CD4-positive, alpha-beta memory T cell (primary cell): ENCODE measurements at regions of chr13 and their contacts with region 1.

Region 1: GRCh38 chr13:51583875-51584730 is at the start of gene WDFY2:
- DNase-seq: peak; percentile 99 to 100 (median 100)
- H3K4me3 ChIP-seq: peak within 1 kb of the TSS; percentile 65 to 92
- H3K4me3 Mint-ChIP-seq: peak within 1 kb of the TSS; percentile 97 to 100 (median 99)
- H3K27ac ChIP-seq: peak within 1 kb of the TSS; percentile 88
- H3K27ac Mint-ChIP-seq: peak within 1 kb of the TSS; percentile 96 to 100 (median 100)
- H3K4me1 ChIP-seq: peaks cover 26% of the 10 kb centered on the region
- H3K4me1 Mint-ChIP-seq: peaks cover 27 to 44% (median 35%) of the 10 kb centered on the region in 4 donors
- H3K27me3 ChIP-seq: no peaks in the 10 kb centered on the region
- H3K27me3 Mint-ChIP-seq: no peaks in the 10 kb centered on the region
- total RNA-seq, gene WDFY2: 20.0 to 21.8 TPM

Region 2: DNA sequence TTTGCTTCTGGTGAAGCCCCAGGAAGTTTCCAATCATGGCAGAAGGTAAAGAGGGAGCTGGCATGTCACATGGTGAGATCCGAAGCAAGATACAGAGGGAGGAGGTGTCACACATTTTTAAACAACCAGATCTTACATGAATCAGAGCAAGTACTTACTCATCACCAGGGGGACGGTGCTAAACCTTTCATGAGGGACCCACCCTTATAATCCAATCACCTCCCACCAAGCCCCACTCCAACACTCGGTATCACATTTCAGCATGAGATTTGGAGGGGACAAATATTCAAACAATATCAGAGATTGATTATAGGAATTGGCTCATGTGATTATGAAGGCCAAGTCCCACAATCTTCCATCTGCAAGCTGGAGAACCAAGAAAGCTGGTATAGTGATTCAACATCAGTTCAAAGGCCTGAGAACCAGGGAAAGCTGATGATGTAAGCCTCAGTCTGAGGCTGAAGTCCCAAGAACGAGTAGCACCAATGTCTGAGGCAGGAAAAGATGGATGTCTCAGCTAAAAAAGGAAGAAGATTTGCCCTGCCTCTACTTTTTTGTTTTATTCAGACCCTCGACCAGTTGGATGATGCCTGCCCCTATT is 58.4 kb before region 1 on chr13:
- CTCF ChIA-PET with region 1: no interaction called
- POLR2A ChIA-PET with region 1: no interaction called
- intact Hi-C with region 1: no loop called
- DNase-seq: no peak
- H3K4me3 ChIP-seq: no peak overlapping the region
- H3K4me3 Mint-ChIP-seq: no peak overlapping the region
- H3K27ac ChIP-seq: no peak overlapping the region
- H3K27ac Mint-ChIP-seq: no peak overlapping the region
- H3K4me1 ChIP-seq: peaks cover 17% of the 10 kb centered on the region
- H3K4me1 Mint-ChIP-seq: peaks cover 4 to 11% (median 7%) of the 10 kb centered on the region in 4 donors
- H3K27me3 ChIP-seq: no peaks in the 10 kb centered on the region
- H3K27me3 Mint-ChIP-seq: no peaks in the 10 kb centered on the region

Region 3: DNA sequence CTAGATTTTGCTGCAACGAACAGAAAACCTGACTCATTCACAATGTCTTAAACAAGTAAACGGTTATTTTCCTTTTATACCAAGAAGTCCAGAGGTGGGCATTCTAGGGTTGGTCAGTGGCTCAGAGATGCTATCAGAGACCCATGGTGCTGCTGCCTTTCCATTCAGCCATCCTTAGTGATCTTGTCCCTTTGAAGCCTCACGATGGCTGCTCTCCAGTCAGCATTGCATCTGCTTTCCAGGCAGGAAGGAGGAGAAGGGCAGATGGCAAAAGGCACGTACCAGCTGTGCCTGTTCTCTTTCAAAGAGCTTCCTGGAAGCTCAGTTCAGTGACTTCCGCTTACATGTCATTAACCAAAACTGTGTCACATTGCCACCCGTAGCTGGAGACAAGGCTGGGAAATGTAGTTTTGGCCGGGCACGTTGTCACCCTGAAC is 30.3 kb after region 1 on chr13:
- CTCF ChIA-PET with region 1: interaction called, 14 read pairs
- POLR2A ChIA-PET with region 1: interaction called, 17 read pairs
- intact Hi-C with region 1: loop called (anchors 1 kb)
- DNase-seq: peak; percentile 49 to 60 (median 56)
- H3K4me3 ChIP-seq: peak overlapping the region; percentile 39 to 42
- H3K4me3 Mint-ChIP-seq: peak overlapping the region; percentile 43 to 93 (median 90)
- H3K27ac ChIP-seq: peak overlapping the region; percentile 51
- H3K27ac Mint-ChIP-seq: peak overlapping the region; percentile 68 to 99 (median 95)
- H3K4me1 ChIP-seq: peaks cover 11% of the 10 kb centered on the region
- H3K4me1 Mint-ChIP-seq: peaks cover 10 to 34% (median 17%) of the 10 kb centered on the region in 4 donors
- H3K27me3 ChIP-seq: no peaks in the 10 kb centered on the region
- H3K27me3 Mint-ChIP-seq: no peaks in the 10 kb centered on the region

Region 4: GRCh38 chr13:51645154-51645650 is 61.1 kb after region 1 on chr13:
- CTCF ChIA-PET with region 1: interaction called, 3 read pairs
- POLR2A ChIA-PET with region 1: interaction called, 15 read pairs
- intact Hi-C with region 1: loop called (anchors 2 kb)
- DNase-seq: peak; percentile 79 to 88 (median 81)
- H3K4me3 ChIP-seq: no peak overlapping the region
- H3K4me3 Mint-ChIP-seq: peak overlapping the region; percentile 43 to 89 (median 84)
- H3K27ac ChIP-seq: peak overlapping the region; percentile 74
- H3K27ac Mint-ChIP-seq: peak overlapping the region; percentile 97 to 100 (median 98)
- H3K4me1 ChIP-seq: peaks cover 51% of the 10 kb centered on the region
- H3K4me1 Mint-ChIP-seq: peaks cover 47 to 60% (median 50%) of the 10 kb centered on the region in 4 donors
- H3K27me3 ChIP-seq: no peaks in the 10 kb centered on the region
- H3K27me3 Mint-ChIP-seq: no peaks in the 10 kb centered on the region

Region 5: DNA sequence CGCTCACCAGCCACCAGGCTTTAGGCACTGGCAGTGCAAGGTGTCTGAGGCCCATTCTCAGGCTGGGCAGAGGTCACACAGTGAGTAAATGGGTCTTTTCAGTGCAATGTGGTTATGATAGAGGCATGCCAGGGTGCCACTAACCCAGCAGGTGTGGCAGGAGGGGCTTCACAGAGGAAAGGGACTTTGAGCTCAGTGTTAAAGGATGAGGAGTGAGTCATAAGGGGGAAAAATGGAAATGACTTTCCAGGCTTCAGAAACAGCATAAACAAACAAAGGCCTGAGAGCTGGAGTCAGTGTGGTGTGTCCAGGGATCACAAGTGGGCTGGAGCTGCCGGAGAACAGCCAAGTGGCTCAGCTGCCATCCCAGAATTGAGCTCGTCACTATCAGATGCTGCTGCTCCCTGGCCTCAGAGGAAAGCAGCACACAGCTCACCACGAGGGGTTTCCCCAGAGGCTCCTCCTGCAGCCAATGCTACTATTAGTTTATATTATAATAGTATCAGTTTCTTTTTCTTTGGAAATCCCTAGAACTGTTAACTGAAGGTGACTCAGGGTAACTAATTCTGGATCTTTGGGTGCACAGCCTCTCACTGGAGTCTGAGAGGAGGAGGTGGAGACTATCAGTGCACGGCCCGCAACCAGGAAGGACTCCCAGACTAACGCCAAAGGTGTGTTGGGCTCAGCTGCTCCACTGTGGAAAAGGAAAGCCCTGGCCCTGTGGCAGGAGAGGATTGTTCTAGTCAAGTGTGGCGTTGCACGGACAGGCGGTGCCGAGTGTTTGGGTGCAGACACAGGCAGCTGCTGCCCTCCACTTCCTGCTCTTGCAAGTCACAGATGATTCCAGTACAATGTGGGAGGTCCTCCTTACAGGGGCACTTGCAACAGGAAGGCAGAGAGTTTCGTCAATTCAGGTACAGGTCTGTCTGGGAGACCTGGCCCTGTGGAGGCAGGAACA is 180.4 kb after region 1 on chr13:
- CTCF ChIA-PET with region 1: interaction called, 7 read pairs
- POLR2A ChIA-PET with region 1: interaction called, 8 read pairs
- intact Hi-C with region 1: loop called (anchors 1 kb)
- DNase-seq: peak; percentile 35 to 82 (median 55)
- H3K4me3 ChIP-seq: peak overlapping the region in 1 of 2 donors; percentile 17
- H3K4me3 Mint-ChIP-seq: peak overlapping the region; percentile 80 to 91 (median 82)
- H3K27ac ChIP-seq: peak overlapping the region; percentile 80
- H3K27ac Mint-ChIP-seq: peak overlapping the region; percentile 92 to 96 (median 95)
- H3K4me1 ChIP-seq: peaks cover 22% of the 10 kb centered on the region
- H3K4me1 Mint-ChIP-seq: peaks cover 15 to 35% (median 24%) of the 10 kb centered on the region in 4 donors
- H3K27me3 ChIP-seq: no peaks in the 10 kb centered on the region
- H3K27me3 Mint-ChIP-seq: no peaks in the 10 kb centered on the region

Region 6: DNA sequence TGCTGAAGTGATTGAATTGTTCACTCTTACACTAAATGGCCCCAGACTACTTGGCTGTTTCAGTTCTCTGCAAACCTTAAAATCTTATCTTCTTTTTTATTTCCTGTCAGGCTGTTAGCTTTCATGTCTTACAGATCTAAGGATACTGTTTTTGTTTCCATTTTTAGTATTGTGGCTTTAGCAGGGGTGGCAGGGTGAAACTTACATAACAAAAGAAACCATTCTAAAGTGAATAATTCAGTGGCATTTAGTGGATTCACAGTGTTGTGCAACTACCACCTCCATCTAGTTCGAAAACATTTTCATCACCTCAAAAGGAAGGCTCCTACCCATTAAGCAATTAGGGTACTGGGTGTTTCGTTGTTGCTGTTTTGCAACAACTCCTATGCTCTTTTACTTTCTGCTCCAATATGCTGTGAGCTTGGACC is 241.1 kb after region 1 on chr13:
- CTCF ChIA-PET with region 1: no interaction called
- POLR2A ChIA-PET with region 1: interaction called, 4 read pairs
- intact Hi-C with region 1: loop called (anchors 2 kb)
- DNase-seq: peak; percentile 57 to 84 (median 79)
- H3K4me3 ChIP-seq: peak overlapping the region; percentile 31 to 56
- H3K4me3 Mint-ChIP-seq: peak overlapping the region; percentile 86 to 95 (median 90)
- H3K27ac ChIP-seq: peak overlapping the region; percentile 65
- H3K27ac Mint-ChIP-seq: peak overlapping the region; percentile 88 to 95 (median 94)
- H3K4me1 ChIP-seq: peaks cover 81% of the 10 kb centered on the region
- H3K4me1 Mint-ChIP-seq: peaks cover 56 to 99% (median 77%) of the 10 kb centered on the region in 4 donors
- H3K27me3 ChIP-seq: no peaks in the 10 kb centered on the region
- H3K27me3 Mint-ChIP-seq: no peaks in the 10 kb centered on the region